ENCODE measurements at regions of chrX and their contacts with region 1.

Region 1: DNA sequence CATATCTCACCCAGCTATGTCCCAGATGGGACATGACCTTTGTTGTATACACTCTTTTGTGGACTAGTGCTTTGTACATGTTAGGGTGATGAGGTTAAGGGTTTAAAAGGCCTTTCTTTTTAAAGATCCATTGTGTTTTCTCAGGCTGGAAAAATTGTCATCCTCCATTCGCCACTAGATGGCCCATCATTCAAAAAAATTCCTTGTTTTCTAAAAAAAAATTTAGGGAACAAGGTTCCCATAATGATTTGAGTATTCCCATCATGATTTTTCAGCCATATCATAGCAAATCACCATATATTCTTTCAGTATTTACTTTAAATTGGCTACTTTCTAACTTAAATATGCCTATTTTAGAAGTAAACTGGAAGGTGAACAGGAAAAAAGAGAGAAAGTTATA is 91.9 kb upstream of the TMEM164 start:
- DNase-seq: peak; percentile 8
- H3K27ac ChIP-seq: no peak overlapping the region
- CTCF ChIP-seq: peak; percentile 56

Region 2: GRCh38 chrX:109952008-109952407 is 41.0 kb after region 1 on chrX:
- CTCF ChIA-PET with region 1: no interaction called
- POLR2A ChIA-PET with region 1: no interaction called
- DNase-seq: no peak
- H3K27ac ChIP-seq: no peak overlapping the region
- CTCF ChIP-seq: no peak

Region 3: GRCh38 chrX:110146521-110146920 is 235.5 kb after region 1 on chrX:
- CTCF ChIA-PET with region 1: interaction called, 13 read pairs
- POLR2A ChIA-PET with region 1: interaction called, 13 read pairs
- DNase-seq: peak; percentile 41
- H3K27ac ChIP-seq: no peak overlapping the region
- CTCF ChIP-seq: peak; percentile 37